ENCODE measurements at regions of chr3 and their contacts with region 1.

Region 1: GRCh38 chr3:101170062-101170771 is 150.2 kb downstream of the IMPG2 start:
- DNase-seq: no peak
- H3K4me3 Mint-ChIP-seq: no peak overlapping the region
- H3K27ac Mint-ChIP-seq: peak overlapping the region; percentile 96
- H3K4me1 Mint-ChIP-seq: peaks cover 38% of the 10 kb centered on the region
- H3K27me3 Mint-ChIP-seq: no peaks in the 10 kb centered on the region

Region 2: DNA sequence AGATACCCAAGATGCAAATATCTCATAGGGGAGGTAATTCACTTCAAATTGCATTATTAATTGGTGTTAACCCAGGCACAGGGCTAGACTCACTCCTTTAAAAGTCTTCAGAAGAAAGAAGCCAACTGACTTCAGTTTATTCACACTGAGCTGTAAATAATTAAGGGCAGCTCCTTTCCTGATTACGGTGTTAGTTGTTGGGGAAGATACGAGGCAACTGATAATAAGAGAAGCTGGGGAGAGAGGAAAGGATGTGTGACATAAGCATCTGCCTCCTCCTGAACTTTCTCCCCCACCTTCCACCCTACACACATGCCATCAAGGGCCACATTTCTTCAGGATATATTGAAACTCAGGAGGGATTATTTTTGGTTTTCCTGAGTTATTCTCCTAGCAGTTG is 513.3 kb before region 1 on chr3:
- intact Hi-C with region 1: no loop called
- DNase-seq: no peak
- H3K4me3 Mint-ChIP-seq: no peak overlapping the region
- H3K27ac Mint-ChIP-seq: no peak overlapping the region
- H3K4me1 Mint-ChIP-seq: no peaks in the 10 kb centered on the region
- H3K27me3 Mint-ChIP-seq: peaks cover 3% of the 10 kb centered on the region

Region 3: GRCh38 chr3:100708967-100709841 is 461.0 kb before region 1 on chr3 and contains the start of gene TFG:
- intact Hi-C with region 1: loop called (anchors 1 kb)
- DNase-seq: peak; percentile 98
- H3K4me3 Mint-ChIP-seq: peak within 1 kb of the TSS; percentile 83
- H3K27ac Mint-ChIP-seq: peak within 1 kb of the TSS; percentile 85
- H3K4me1 Mint-ChIP-seq: peaks cover 41% of the 10 kb centered on the region
- H3K27me3 Mint-ChIP-seq: no peaks in the 10 kb centered on the region
- total RNA-seq, gene TFG: 79.3 and 81.2 TPM in 2 replicates

Region 4: GRCh38 chr3:101133652-101134051 is 36.6 kb before region 1 on chr3:
- intact Hi-C with region 1: loop called (anchors 5 kb)
- DNase-seq: no peak
- H3K4me3 Mint-ChIP-seq: no peak overlapping the region
- H3K27ac Mint-ChIP-seq: no peak overlapping the region
- H3K4me1 Mint-ChIP-seq: peaks cover 15% of the 10 kb centered on the region
- H3K27me3 Mint-ChIP-seq: peaks cover 7% of the 10 kb centered on the region

Region 5: GRCh38 chr3:101195951-101196713 is 25.9 kb after region 1 on chr3:
- intact Hi-C with region 1: loop called (anchors 2 kb)
- DNase-seq: no peak
- H3K4me3 Mint-ChIP-seq: no peak overlapping the region
- H3K27ac Mint-ChIP-seq: no peak overlapping the region
- H3K4me1 Mint-ChIP-seq: peaks cover 2% of the 10 kb centered on the region
- H3K27me3 Mint-ChIP-seq: peaks cover 2% of the 10 kb centered on the region

Region 6: DNA sequence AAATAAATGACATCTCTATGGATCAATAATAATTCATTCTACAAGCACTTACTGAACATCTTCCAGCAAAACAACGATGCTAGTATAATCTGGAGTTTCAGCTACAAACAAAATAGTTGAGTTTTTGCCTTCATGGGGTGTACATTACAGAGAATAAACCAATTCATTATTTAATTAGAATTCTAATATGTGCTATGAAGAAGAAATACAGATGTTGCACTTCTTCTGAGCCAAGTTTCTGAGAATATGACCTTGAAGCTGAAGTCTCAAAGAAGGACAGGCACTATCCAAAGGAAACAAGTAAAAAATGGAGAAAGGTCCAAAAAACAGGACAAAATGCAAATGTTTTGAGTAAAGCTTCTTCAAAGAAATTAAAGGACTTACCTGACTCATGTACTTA is 248.6 kb after region 1 on chr3:
- intact Hi-C with region 1: loop called (anchors 1 kb)
- DNase-seq: no peak
- H3K4me3 Mint-ChIP-seq: no peak overlapping the region
- H3K27ac Mint-ChIP-seq: no peak overlapping the region
- H3K4me1 Mint-ChIP-seq: peaks cover 21% of the 10 kb centered on the region
- H3K27me3 Mint-ChIP-seq: no peaks in the 10 kb centered on the region

Region 7: GRCh38 chr3:101573449-101574387 is 403.5 kb after region 1 on chr3 and contains the start of gene PCNP:
- intact Hi-C with region 1: loop called (anchors 5 kb)
- DNase-seq: peak; percentile 99
- H3K4me3 Mint-ChIP-seq: peak within 1 kb of the TSS; percentile 96
- H3K27ac Mint-ChIP-seq: peak within 1 kb of the TSS; percentile 99
- H3K4me1 Mint-ChIP-seq: peaks cover 56% of the 10 kb centered on the region
- H3K27me3 Mint-ChIP-seq: no peaks in the 10 kb centered on the region
- total RNA-seq, gene PCNP: 190 and 192 TPM in 2 replicates

Measured in activated T-helper 2 cell treated with anti-CD3 and anti-CD28 coated beads, Interferon-gamma antibody, Interleukin-2, Interleukin-4, amounts not matched to agents 10 μg/mL and 5 μg/mL and 100 μg/mL, durations not matched to agents 14 hours and 24 hours and 36 hours (primary cell).